ENCODE measurements at regions of chr12 and their contacts with region 1.

Region 1: DNA sequence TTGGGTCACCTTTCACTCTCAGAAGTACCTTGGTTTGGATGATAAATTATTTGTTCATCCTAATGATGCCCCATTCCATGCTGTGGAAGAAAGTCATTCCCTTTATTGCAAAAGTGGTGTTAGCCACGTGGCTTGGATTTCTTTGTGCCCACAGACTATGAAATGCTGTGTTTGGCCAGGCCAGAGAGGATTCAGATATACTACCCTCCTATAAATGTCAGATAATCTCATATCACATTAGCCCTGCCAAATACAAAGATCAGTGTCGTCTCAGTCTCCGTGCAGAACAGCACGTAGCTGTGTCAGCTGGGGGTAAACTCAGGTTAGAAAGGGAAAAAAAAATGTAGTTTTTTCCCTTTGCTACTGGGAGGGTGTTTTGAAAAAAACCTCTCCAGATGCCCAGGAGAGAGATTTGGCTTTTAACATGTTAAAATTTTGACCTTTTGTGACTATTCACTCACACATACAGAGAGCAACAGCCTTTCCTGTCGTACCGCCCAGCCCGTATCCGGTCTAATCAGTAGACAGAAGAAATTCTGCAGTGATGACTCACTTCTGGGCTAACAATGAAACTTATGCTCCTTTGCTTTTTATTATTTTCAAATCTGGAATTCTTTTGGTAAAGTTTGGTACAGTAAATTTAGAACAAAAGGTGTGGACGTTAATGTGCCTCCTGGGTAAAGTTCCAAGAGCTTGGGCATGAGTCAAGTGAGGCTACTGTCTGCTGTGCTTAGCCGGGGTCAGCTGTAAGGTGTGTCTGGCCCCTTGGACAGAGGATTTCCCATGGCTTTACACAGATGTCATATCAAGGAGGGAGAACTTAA is 8.5 kb upstream of the PTPRB start:
- DNase-seq: no peak

Region 2: GRCh38 chr12:70590051-70590450 is 55.7 kb before region 1 on chr12:
- intact Hi-C with region 1: loop called (anchors 10 kb)
- DNase-seq: no peak

Region 3: GRCh38 chr12:70609711-70610491 is 35.8 kb before region 1 on chr12:
- intact Hi-C with region 1: loop called (anchors 5 kb)
- DNase-seq: peak; percentile 82

Region 4: DNA sequence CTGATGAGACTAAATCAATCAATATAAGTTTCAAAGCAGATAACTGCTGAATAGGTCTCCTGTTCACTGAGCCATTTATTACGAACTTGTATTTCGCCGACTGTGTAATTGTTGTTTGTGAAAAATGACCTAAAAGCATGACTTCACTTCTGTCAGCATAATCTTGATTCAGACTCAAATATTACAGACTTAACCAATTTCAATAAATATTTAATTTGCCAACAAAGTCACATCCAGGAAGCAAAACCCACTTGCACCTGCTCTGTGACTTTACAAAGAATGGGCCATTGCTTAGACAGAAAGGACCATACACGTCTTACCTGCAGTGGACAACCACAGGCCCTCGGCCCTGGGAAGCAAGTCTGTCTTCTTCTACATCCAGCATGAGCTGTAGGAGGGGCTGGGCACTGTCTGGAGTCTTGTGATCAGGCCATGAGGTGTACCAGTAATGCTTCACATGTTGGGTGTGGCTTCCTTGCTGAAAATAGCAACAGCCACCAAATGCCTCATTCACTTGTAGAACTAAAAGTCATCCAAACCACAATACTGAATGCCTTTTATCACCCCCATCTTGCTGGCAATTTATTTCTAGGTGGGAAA is 15.0 kb after region 1 on chr12:
- intact Hi-C with region 1: loop called (anchors 2 kb)
- DNase-seq: no peak

Region 5: DNA sequence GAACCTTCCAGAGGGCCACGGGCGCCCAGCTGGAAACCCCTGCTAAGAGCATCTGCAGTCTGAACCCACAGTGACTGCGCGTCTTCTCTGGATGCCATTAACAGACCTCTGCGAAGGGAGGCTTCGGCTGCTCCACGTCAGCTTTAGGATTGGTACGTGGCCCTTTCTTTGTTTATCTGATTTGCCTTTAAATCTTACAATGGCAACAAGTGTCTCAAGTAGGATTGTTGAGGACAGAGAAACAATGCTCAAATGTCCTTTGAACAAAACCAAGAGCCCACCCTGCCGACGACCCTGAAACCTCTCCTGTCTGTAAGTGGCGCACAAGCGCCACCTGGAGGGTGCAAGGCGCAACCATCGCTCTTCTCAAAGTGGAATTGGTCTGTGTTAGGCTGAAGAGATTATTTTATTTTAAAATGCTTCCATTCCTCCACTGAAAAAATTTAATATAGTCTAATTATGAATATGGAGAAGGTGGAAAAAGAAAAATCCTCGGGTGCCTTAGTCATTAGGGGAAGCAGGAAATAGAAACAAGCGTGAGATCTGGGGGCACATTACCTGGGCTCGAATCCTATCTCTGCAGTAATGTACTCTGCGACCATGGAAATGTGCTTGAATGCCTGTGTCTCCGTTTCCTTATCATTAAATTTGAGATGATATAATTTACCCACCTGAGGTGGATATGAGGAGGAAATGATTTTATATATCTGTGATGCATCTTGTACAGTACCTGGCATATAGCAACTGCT is 74.1 kb after region 1 on chr12:
- intact Hi-C with region 1: loop called (anchors 5 kb)
- DNase-seq: no peak